OCI-LY7 (cell line): ENCODE measurements at regions of chr11 and their contacts with region 1.

Region 1: GRCh38 chr11:102836290-102836875 is 7.0 kb downstream of the MMP3 start:
- DNase-seq: no peak
- H3K4me3 ChIP-seq: no peak overlapping the region
- H3K27ac ChIP-seq: no peak overlapping the region
- H3K4me1 ChIP-seq: no peaks in the 10 kb centered on the region
- CTCF ChIP-seq: no peak

Region 2: GRCh38 chr11:101215069-101215468 is 1621.3 kb before region 1 on chr11:
- CTCF ChIA-PET with region 1: no interaction called
- POLR2A ChIA-PET with region 1: interaction called, 14 read pairs
- intact Hi-C with region 1: no loop called
- DNase-seq: no peak
- H3K4me3 ChIP-seq: no peak overlapping the region
- H3K27ac ChIP-seq: no peak overlapping the region
- H3K4me1 ChIP-seq: no peaks in the 10 kb centered on the region
- CTCF ChIP-seq: no peak

Region 3: GRCh38 chr11:102882389-102883024 is 46.1 kb after region 1 on chr11:
- CTCF ChIA-PET with region 1: no interaction called
- POLR2A ChIA-PET with region 1: no interaction called
- intact Hi-C with region 1: no loop called
- DNase-seq: no peak
- H3K4me3 ChIP-seq: no peak overlapping the region
- H3K27ac ChIP-seq: no peak overlapping the region
- H3K4me1 ChIP-seq: no peaks in the 10 kb centered on the region
- CTCF ChIP-seq: no peak